Activated naive CD4-positive, alpha-beta T cell treated with anti-CD3 and anti-CD28 coated beads for 36 hours (primary cell): ENCODE measurements at regions of chr12 and their contacts with region 1.

Region 1: GRCh38 chr12:39319187-39319586 is 123.7 kb downstream of the KIF21A start:
- DNase-seq: no peak
- H3K4me3 Mint-ChIP-seq: no peak overlapping the region
- H3K27ac Mint-ChIP-seq: no peak overlapping the region
- H3K4me1 Mint-ChIP-seq: no peaks in the 10 kb centered on the region
- H3K27me3 Mint-ChIP-seq: no peaks in the 10 kb centered on the region

Region 2: GRCh38 chr12:39343665-39344064 is 24.5 kb after region 1 on chr12:
- CTCF ChIA-PET with region 1: interaction called, 10 read pairs
- intact Hi-C with region 1: no loop called
- DNase-seq: no peak
- H3K4me3 Mint-ChIP-seq: no peak overlapping the region
- H3K27ac Mint-ChIP-seq: no peak overlapping the region
- H3K4me1 Mint-ChIP-seq: peaks cover 11% of the 10 kb centered on the region
- H3K27me3 Mint-ChIP-seq: no peaks in the 10 kb centered on the region

Region 3: DNA sequence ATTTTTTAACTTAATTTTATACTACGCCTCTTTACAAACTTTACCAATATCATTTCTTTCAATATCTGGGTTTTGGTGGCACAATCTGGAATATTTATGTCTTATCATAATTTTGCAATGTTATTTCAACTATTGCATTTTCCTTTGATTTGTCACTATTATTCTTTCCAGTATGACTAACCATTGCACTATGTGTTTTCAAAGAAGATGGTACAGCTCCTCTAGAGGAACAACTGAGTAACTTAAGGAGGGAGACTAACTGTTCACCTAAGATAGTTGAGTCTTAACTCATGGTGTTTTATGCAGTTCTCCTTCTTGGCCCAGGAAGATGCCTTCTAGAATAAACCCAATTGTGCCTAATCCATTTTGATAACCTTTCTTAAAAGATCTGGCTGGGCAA is 184.3 kb after region 1 on chr12:
- CTCF ChIA-PET with region 1: no interaction called
- intact Hi-C with region 1: no loop called
- DNase-seq: no peak
- H3K4me3 Mint-ChIP-seq: no peak overlapping the region
- H3K27ac Mint-ChIP-seq: no peak overlapping the region
- H3K4me1 Mint-ChIP-seq: no peaks in the 10 kb centered on the region
- H3K27me3 Mint-ChIP-seq: no peaks in the 10 kb centered on the region

Region 4: GRCh38 chr12:39595923-39596322 is 276.7 kb after region 1 on chr12:
- CTCF ChIA-PET with region 1: no interaction called
- intact Hi-C with region 1: loop called (anchors 5 kb)
- DNase-seq: no peak
- H3K4me3 Mint-ChIP-seq: no peak overlapping the region
- H3K27ac Mint-ChIP-seq: peak overlapping the region; percentile 78
- H3K4me1 Mint-ChIP-seq: peaks cover 19% of the 10 kb centered on the region
- H3K27me3 Mint-ChIP-seq: no peaks in the 10 kb centered on the region